Left ventricle myocardium inferior (tissue), 1 donor: ENCODE measurements at regions of chr17 and their contacts with region 1.

Region 1: GRCh38 chr17:76182016-76182764 is 41.1 kb upstream of the FOXJ1 start:
- DNase-seq: peak; percentile 86
- H3K4me3 ChIP-seq: no peak overlapping the region
- H3K27ac ChIP-seq: peak overlapping the region; percentile 27
- H3K4me1 ChIP-seq: peaks cover 8% of the 10 kb centered on the region
- H3K27me3 ChIP-seq: no peaks in the 10 kb centered on the region
- CTCF ChIP-seq: peak; percentile 90

Region 2: DNA sequence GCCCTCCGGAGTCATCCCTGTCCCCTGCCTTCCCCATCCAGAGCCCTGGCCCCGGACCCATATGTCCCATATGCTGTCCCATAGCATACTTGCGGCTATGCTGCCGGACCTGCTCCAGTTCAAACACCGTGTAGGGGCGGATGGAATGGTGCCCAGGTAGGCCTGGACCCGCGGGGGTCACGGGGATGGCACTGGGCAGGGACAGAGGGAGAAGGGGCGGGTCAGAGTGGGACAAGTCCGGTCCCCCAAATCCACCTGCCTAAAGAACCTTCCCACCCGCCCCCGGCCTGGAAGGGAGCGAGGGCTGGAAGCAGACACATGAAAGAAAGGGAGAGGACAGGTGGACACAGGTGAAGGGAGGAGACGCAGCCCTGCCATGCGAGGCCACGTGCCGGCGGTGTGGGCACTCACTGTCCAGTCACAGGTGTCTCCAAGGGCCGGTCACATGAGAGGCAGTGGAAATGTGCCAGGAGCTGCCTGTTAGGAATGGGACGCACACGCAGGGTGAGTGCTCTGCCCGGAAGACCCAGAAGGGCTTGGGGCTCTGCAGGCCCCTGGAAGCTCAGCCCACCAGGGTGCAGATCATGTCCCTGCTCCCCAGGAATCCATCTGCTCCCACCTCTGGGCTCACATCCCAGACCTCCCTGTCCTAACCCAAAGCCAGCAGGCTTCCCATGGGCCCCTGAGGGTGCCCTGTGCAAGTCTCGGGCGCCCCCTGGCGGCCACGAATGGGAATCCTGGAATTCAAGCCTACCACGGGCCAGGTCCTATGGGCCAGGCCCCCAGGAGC is 97.0 kb after region 1 on chr17:
- intact Hi-C with region 1: loop called (anchors 10 kb)
- DNase-seq: peak; percentile 89
- H3K4me3 ChIP-seq: no peak overlapping the region
- H3K27ac ChIP-seq: no peak overlapping the region
- H3K4me1 ChIP-seq: peaks cover 24% of the 10 kb centered on the region
- H3K27me3 ChIP-seq: no peaks in the 10 kb centered on the region
- CTCF ChIP-seq: peak; percentile 98